ENCODE measurements at regions of chr10 and their contacts with region 1.

Region 1: GRCh38 chr10:21533467-21534279 is at the start of gene MLLT10:
- DNase-seq: peak; percentile 87 to 97
- ATAC-seq: peak; percentile 82 to 94 (median 83)
- H3K4me3 ChIP-seq: peak within 1 kb of the TSS; percentile 73
- H3K4me3 Mint-ChIP-seq: peak within 1 kb of the TSS; percentile 91
- H3K27ac ChIP-seq: peak within 1 kb of the TSS; percentile 69
- H3K27ac Mint-ChIP-seq: peak within 1 kb of the TSS; percentile 76 to 90
- H3K4me1 ChIP-seq: peaks cover 11% of the 10 kb centered on the region
- H3K4me1 Mint-ChIP-seq: peaks cover 16% of the 10 kb centered on the region in 2 donors
- H3K27me3 ChIP-seq: peaks cover 6% of the 10 kb centered on the region
- H3K27me3 Mint-ChIP-seq: peaks cover 5 to 9% of the 10 kb centered on the region in 2 donors
- CTCF ChIP-seq: peak; percentile 27
- total RNA-seq, gene MLLT10: 40.4 to 65.2 (median 60.0) TPM

Region 2: GRCh38 chr10:21989453-21990154 is 455.9 kb after region 1 on chr10:
- intact Hi-C with region 1: no loop called
- DNase-seq: peak in 1 of 2 donors; percentile 64
- ATAC-seq: peak; percentile 68 to 86 (median 85)
- H3K4me3 ChIP-seq: no peak overlapping the region
- H3K4me3 Mint-ChIP-seq: no peak overlapping the region
- H3K27ac ChIP-seq: no peak overlapping the region
- H3K27ac Mint-ChIP-seq: peak overlapping the region; percentile 23 to 76
- H3K4me1 ChIP-seq: no peaks in the 10 kb centered on the region
- H3K4me1 Mint-ChIP-seq: peaks cover 31 to 40% of the 10 kb centered on the region in 2 donors
- H3K27me3 ChIP-seq: no peaks in the 10 kb centered on the region
- H3K27me3 Mint-ChIP-seq: no peaks in the 10 kb centered on the region
- CTCF ChIP-seq: peak; percentile 43

Region 3: GRCh38 chr10:22251751-22252223 is 718.1 kb after region 1 on chr10:
- intact Hi-C with region 1: loop called (anchors 5 kb)
- DNase-seq: peak; percentile 34 to 81
- ATAC-seq: peak; percentile 61 to 68 (median 67)
- H3K4me3 ChIP-seq: peak overlapping the region; percentile 83
- H3K4me3 Mint-ChIP-seq: peak overlapping the region; percentile 98
- H3K27ac ChIP-seq: peak overlapping the region; percentile 96
- H3K27ac Mint-ChIP-seq: peak overlapping the region; percentile 74 to 85
- H3K4me1 ChIP-seq: peaks cover 19% of the 10 kb centered on the region
- H3K4me1 Mint-ChIP-seq: peaks cover 17 to 23% of the 10 kb centered on the region in 2 donors
- H3K27me3 ChIP-seq: peaks cover 19% of the 10 kb centered on the region
- H3K27me3 Mint-ChIP-seq: peaks cover 34 to 49% of the 10 kb centered on the region in 2 donors
- CTCF ChIP-seq: no peak